ENCODE measurements at regions of chr17 and their contacts with region 1.

Region 1: GRCh38 chr17:9115446-9116191 is 94.3 kb downstream of the NTN1 start:
- DNase-seq: peak; percentile 67 to 78
- ATAC-seq: peak; percentile 84 to 91
- H3K4me3 ChIP-seq: peak overlapping the region; percentile 52
- H3K27ac ChIP-seq: peak overlapping the region; percentile 73 to 84
- H3K4me1 ChIP-seq: peaks cover 5% of the 10 kb centered on the region
- CTCF ChIP-seq: peak; percentile 46
- EP300 ChIP-seq: no peak
- POLR2A ChIP-seq: no peak
- RAD21 ChIP-seq: peak; percentile 55 to 62

Region 2: DNA sequence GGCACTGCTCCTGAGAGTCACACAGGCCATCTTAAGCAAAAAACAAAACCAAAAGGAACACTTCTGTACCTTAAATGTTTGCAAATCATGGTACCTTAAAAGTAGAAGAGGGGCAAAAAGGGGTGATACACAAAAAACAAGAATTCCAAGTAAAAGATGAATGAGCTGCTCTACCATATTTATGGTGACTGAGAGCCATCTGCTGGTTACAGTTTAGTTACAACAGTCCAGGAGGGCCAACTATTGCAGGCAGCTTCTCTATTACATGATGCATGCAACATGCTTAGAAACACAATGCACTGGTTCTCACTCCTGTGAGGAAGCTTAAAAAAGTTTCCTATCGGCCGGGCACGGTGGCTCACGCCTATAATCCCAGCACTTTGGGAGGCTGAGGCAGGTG is 406.5 kb after region 1 on chr17:
- CTCF ChIA-PET with region 1: interaction called, 15 read pairs
- POLR2A ChIA-PET with region 1: no interaction called
- DNase-seq: peak; percentile 31 to 60
- ATAC-seq: peak; percentile 85 to 91
- H3K4me3 ChIP-seq: no peak overlapping the region
- H3K27ac ChIP-seq: no peak overlapping the region
- H3K4me1 ChIP-seq: no peaks in the 10 kb centered on the region
- CTCF ChIP-seq: peak; percentile 83
- EP300 ChIP-seq: no peak
- POLR2A ChIP-seq: no peak
- RAD21 ChIP-seq: peak; percentile 87 to 88

Measured in A549 (cell line).